ENCODE measurements at regions of chr9 and their contacts with region 1.

Region 1: DNA sequence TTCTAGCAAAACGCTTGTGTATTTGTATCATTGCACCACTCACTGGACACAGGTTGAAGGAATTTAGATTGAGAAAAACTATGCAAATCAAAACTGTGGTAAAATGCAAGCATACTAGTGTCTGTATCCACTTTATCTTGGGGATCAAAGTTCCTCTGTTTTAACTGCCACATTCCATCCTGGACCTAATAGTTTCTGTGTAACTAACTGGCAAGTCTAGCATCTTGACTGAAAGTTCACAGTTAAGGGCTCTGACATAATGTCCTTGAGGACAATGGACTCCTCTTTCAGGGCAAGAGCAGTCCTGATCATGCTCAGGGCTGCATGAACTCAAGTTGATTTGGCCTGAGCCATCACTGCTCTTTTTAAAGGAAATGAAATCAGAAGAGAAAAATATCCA is 30.7 kb downstream of the NFIB start:
- DNase-seq: no peak

Region 2: GRCh38 chr9:13431222-13431536 is 852.1 kb before region 1 on chr9:
- intact Hi-C with region 1: no loop called
- DNase-seq: no peak

Region 3: DNA sequence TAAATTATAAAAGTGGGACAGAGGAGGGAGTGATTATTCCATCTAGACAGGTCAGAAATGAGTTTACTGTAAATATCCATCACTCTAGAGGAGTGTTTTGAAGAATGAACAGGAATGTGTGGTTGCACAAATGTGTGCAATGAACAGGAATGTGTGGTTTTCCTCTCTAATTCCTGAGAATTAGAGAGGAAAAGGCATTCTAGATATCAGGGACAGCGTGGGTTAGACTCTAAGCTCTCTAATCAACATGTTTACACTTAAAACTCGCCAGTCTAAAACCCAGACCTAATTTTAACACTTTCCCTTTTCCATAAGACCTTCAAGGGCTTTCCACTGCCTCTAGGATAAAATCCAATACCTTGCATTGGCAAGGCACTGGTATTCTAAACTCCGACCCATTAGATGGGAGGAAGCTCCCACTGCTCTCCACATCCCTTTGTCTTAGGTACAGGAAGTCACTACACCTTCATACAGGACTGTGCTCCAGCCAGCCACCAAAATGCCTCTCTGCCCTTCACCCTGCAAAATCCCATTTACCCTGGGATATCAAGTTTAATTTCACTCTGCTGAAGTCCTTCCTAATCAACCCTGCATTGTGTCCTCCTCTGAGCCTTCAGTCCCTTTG is 37.3 kb before region 1 on chr9:
- intact Hi-C with region 1: loop called in 1 of 2 experiments (anchors 1 kb)
- DNase-seq: no peak

Region 4: DNA sequence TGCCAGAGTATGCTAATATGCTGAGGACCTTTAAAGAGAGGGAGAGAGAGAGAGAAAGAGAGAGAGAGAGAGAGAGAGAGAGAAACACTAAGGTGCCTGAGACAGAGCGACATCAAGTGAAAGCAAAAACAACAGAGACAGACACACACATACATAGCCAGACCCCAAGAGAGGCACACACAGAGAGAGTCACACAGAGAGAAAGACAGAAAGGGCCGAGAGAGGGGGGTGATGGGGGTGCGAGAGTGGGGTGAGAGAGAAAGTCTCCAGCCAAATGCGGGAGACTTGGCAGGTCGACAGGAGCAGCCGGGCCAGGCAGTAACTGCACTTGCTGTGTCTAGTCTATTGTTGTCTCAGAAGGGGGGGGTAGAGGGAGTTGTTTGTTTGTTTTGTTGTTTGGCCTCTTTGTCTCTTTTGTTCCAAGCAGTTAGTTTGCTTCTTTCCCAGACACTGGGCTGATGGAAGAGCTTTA is 60.8 kb after region 1 on chr9:
- intact Hi-C with region 1: no loop called
- DNase-seq: no peak

Measured in posterior vena cava (tissue), 2 donors.